ENCODE measurements at regions of chr19 and their contacts with region 1.

Region 1: DNA sequence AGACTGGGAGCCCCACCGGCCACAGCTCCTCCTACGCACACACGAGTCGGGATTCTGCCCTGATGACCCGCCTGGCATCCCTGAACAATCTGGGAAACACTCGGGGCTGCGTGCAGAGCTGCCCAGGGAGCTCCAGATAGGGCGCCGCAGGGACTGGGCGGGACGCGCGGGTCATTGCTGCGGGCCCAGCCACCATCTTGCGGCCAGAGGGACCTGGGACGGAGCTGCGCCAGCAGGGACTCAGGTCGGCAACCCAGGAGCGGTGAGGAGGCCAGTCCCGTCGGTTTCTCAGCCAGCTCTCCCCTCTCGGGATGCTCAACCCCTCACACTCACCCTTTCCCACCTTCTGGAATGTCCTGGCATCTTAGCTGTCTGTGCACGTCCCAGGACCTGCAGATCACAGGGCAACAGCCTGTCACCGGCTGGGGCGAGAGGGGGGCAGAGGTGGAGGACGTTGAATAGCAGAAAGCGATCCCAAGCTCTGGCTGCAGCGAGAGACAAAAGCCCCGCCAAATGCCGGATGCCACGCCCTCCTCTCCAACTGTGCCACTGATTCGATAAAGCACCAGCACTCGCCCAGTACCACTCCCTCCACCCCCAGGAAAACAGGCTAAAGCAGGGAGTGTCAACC is 20.4 kb upstream of the ZNF91 start:
- DNase-seq: peak; percentile 86
- H3K4me3 ChIP-seq: peak overlapping the region; percentile 58 to 74
- H3K27ac ChIP-seq: peak overlapping the region in 1 of 2 experiments; percentile 43; a peak in 1 of 4 replicates
- H3K4me1 ChIP-seq: no peaks in the 10 kb centered on the region
- H3K27me3 ChIP-seq: no peaks in the 10 kb centered on the region
- CTCF ChIP-seq: no peak
- EP300 ChIP-seq: no peak
- RAD21 ChIP-seq: no peak; the same call in 1 of the 2 replicates

Region 2: DNA sequence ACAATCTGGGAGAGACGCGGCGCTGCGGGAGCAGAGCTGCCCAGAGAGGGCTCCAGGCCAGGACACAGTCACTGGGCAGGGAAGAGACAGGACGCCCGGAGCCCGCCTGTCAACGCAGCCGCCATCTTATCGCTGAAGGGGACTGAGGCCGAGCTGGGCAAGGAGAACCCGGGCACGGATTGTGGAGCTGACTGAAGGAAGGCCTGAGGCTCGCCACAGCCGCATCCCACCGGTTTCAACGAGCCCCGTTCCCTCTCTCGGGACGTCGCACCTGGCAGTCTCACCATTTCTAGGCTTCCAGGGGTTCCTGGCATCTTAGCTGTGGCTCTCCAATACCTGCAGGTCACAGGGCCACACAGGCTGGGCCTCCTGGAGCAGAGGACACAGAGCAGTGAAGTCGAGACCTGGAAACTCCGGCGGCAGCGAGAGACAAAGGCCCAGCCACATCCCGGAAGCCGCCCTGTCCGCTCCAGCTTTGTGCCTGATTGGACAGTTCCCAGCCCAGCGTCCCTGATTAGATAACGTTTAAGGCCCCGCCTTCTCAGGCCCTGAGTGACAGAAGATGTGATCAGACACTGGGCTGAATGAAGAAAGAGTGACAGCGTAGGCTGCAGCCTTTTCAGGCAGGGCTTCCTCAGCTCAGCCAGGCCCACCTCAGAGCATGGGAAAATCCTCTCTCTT is 20.5 kb before region 1 on chr19 and contains the start of gene ZNF91:
- CTCF ChIA-PET with region 1: interaction called, 3 read pairs
- POLR2A ChIA-PET with region 1: interaction called, 21 read pairs
- DNase-seq: peak; percentile 79
- H3K4me3 ChIP-seq: peak within 1 kb of the TSS; percentile 72 to 84
- H3K27ac ChIP-seq: peak within 1 kb of the TSS; percentile 87 to 93
- H3K4me1 ChIP-seq: peaks cover 0 to 5% of the 10 kb centered on the region in 2 experiments; a peak in 1 of 4 replicates
- H3K27me3 ChIP-seq: no peaks in the 10 kb centered on the region
- CTCF ChIP-seq: no peak
- EP300 ChIP-seq: no peak
- RAD21 ChIP-seq: no peak
- polyA plus RNA-seq, gene ZNF91: 11.8 and 13.1 TPM in 2 replicates